ENCODE measurements at regions of chr5 and their contacts with region 1.

Region 1: GRCh38 chr5:141564216-141564692 is 54.5 kb downstream of the DIAPH1 start:
- H3K4me3 ChIP-seq: no peak overlapping the region
- H3K27ac ChIP-seq: no peak overlapping the region
- H3K4me1 ChIP-seq: no peaks in the 10 kb centered on the region
- CTCF ChIP-seq: peak; percentile 76

Region 2: GRCh38 chr5:141245250-141245717 is 319.0 kb before region 1 on chr5 and contains the start of gene PCDHB15:
- CTCF ChIA-PET with region 1: interaction called, 12 read pairs
- POLR2A ChIA-PET with region 1: no interaction called
- H3K4me3 ChIP-seq: peak within 1 kb of the TSS; percentile 15
- H3K27ac ChIP-seq: no peak within 1 kb of the TSS
- H3K4me1 ChIP-seq: no peaks in the 10 kb centered on the region
- CTCF ChIP-seq: no peak

Region 3: GRCh38 chr5:141369994-141370848 is 194.0 kb before region 1 on chr5 and contains the start of gene PCDHGB3:
- CTCF ChIA-PET with region 1: interaction called, 22 read pairs
- POLR2A ChIA-PET with region 1: no interaction called
- H3K4me3 ChIP-seq: no peak within 1 kb of the TSS
- H3K27ac ChIP-seq: no peak within 1 kb of the TSS
- H3K4me1 ChIP-seq: no peaks in the 10 kb centered on the region
- CTCF ChIP-seq: no peak

Region 4: GRCh38 chr5:141420855-141421496 is 143.3 kb before region 1 on chr5 and contains the start of gene PCDHGA11:
- CTCF ChIA-PET with region 1: interaction called, 116 read pairs
- POLR2A ChIA-PET with region 1: no interaction called
- H3K4me3 ChIP-seq: peak within 1 kb of the TSS; percentile 67
- H3K27ac ChIP-seq: no peak within 1 kb of the TSS
- H3K4me1 ChIP-seq: no peaks in the 10 kb centered on the region
- CTCF ChIP-seq: peak; percentile 59

Region 5: DNA sequence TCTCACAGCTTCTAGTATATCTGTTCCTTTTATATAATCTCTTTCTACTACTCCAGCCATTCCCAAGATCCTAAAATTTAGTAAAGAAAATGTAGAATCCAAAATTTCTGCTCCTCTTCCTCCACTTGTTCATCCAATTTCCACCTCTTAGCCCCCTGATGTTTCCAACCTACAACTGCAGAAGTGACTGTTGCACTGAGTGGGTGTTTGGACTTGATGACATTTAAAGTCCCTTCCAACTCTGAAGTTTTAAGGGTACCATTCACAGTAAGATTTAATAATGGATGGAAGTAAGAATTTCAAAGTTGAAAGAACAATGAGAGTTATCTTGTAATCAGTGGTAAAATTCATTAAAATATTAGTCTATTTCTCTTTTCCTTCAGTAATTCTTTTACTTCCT is 49.1 kb after region 1 on chr5:
- CTCF ChIA-PET with region 1: interaction called, 15 read pairs
- POLR2A ChIA-PET with region 1: no interaction called
- H3K4me3 ChIP-seq: no peak overlapping the region
- H3K27ac ChIP-seq: no peak overlapping the region
- H3K4me1 ChIP-seq: peaks cover 30% of the 10 kb centered on the region
- CTCF ChIP-seq: no peak